ENCODE measurements at regions of chr1 and their contacts with region 1.

Region 1: GRCh38 chr1:183915625-183916510 is 110.9 kb downstream of the RGL1 start:
- DNase-seq: peak; percentile 92
- H3K4me3 Mint-ChIP-seq: no peak overlapping the region
- H3K27ac Mint-ChIP-seq: no peak overlapping the region
- H3K4me1 Mint-ChIP-seq: peaks cover 15% of the 10 kb centered on the region
- H3K27me3 Mint-ChIP-seq: no peaks in the 10 kb centered on the region

Region 2: GRCh38 chr1:183281553-183282091 is 634.2 kb before region 1 on chr1:
- intact Hi-C with region 1: loop called (anchors 10 kb)
- DNase-seq: peak; percentile 91
- H3K4me3 Mint-ChIP-seq: no peak overlapping the region
- H3K27ac Mint-ChIP-seq: no peak overlapping the region
- H3K4me1 Mint-ChIP-seq: peaks cover 6% of the 10 kb centered on the region
- H3K27me3 Mint-ChIP-seq: peaks cover 3% of the 10 kb centered on the region

Region 3: GRCh38 chr1:183655562-183656075 is 260.2 kb before region 1 on chr1:
- intact Hi-C with region 1: loop called (anchors 1 kb)
- DNase-seq: peak; percentile 92
- H3K4me3 Mint-ChIP-seq: no peak overlapping the region
- H3K27ac Mint-ChIP-seq: peak overlapping the region; percentile 30
- H3K4me1 Mint-ChIP-seq: peaks cover 35% of the 10 kb centered on the region
- H3K27me3 Mint-ChIP-seq: peaks cover 4% of the 10 kb centered on the region

Region 4: GRCh38 chr1:183804881-183805841 is 110.7 kb before region 1 on chr1 and contains the start of gene RGL1:
- intact Hi-C with region 1: loop called (anchors 2 kb)
- DNase-seq: peak; percentile 81
- H3K4me3 Mint-ChIP-seq: peak within 1 kb of the TSS; percentile 87
- H3K27ac Mint-ChIP-seq: peak within 1 kb of the TSS; percentile 26
- H3K4me1 Mint-ChIP-seq: peaks cover 11% of the 10 kb centered on the region
- H3K27me3 Mint-ChIP-seq: peaks cover 3% of the 10 kb centered on the region
- total RNA-seq, gene RGL1: 1.7 and 2.0 TPM in 2 replicates

Region 5: GRCh38 chr1:183956559-183957188 is 40.8 kb after region 1 on chr1:
- intact Hi-C with region 1: loop called (anchors 1 kb)
- DNase-seq: peak; percentile 91
- H3K4me3 Mint-ChIP-seq: peak overlapping the region; percentile 58
- H3K27ac Mint-ChIP-seq: no peak overlapping the region
- H3K4me1 Mint-ChIP-seq: peaks cover 21% of the 10 kb centered on the region
- H3K27me3 Mint-ChIP-seq: no peaks in the 10 kb centered on the region

Region 6: DNA sequence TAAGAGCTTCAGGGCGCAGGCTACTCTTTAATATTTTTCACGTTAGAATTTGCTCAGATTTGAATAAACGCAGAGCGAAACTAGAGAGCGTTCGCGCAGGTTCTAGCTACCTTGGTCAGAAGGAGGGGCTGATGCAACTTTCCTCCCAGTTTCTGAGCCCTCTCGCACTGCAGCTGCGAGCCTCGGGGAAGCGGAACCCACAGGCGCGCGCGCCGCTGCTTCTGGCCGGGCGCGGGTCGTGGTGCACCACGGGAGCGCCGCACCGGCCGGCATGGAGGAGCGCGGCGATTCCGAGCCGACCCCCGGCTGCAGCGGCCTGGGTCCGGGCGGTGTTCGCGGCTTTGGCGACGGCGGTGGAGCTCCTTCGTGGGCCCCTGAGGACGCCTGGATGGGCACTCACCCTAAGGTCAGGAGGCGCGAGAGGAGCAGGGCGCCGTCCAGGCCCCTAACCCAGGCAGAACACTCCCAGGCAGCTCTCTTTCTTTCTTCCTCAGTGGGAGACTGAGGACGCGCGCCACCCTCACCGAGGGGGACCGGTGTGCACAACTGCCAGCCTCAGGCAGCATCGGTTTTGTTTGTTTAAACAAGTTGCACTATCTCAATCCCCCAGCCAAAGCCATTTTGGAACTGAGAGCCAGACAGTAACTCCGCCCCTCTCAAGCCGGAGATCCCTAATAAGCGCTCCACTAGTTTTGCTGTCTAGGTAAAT is 135.8 kb after region 1 on chr1 and contains the start of gene TSEN15:
- intact Hi-C with region 1: loop called (anchors 5 kb)
- DNase-seq: peak; percentile 93
- H3K4me3 Mint-ChIP-seq: peak within 1 kb of the TSS; percentile 96
- H3K27ac Mint-ChIP-seq: peak within 1 kb of the TSS; percentile 98
- H3K4me1 Mint-ChIP-seq: peaks cover 30% of the 10 kb centered on the region
- H3K27me3 Mint-ChIP-seq: peaks cover 25% of the 10 kb centered on the region
- total RNA-seq, gene TSEN15: 44.9 and 48.3 TPM in 2 replicates

Region 7: DNA sequence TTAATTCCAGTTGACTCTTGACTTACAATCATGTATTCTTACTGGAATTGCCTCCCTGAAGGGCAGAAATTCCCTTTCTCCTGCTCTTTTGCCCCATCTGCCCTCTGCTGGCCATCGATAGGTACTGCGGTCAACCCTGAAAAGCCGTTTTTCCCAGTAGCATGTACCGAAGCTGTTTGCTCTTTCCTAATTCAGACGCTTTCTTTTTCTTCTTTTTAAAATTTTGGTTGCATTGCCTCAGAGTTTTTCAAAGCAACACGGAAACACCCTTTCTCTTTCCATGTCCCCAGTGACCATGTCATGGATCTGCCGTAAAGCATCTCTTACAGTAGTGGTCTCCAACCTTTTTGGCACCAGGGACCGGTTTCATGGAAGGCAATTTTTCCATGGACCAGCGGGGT is 306.8 kb after region 1 on chr1:
- intact Hi-C with region 1: loop called (anchors 10 kb)
- DNase-seq: peak; percentile 82
- H3K4me3 Mint-ChIP-seq: no peak overlapping the region
- H3K27ac Mint-ChIP-seq: no peak overlapping the region
- H3K4me1 Mint-ChIP-seq: peaks cover 4% of the 10 kb centered on the region
- H3K27me3 Mint-ChIP-seq: peaks cover 12% of the 10 kb centered on the region

Measured in activated CD4-positive, alpha-beta T cell treated with anti-CD3 and anti-CD28 coated beads, Interleukin-2, amount 10 ng/mL, durations not matched to agents 24 days and 14 days (primary cell).